ENCODE measurements at regions of chr6 and their contacts with region 1.

Region 1: DNA sequence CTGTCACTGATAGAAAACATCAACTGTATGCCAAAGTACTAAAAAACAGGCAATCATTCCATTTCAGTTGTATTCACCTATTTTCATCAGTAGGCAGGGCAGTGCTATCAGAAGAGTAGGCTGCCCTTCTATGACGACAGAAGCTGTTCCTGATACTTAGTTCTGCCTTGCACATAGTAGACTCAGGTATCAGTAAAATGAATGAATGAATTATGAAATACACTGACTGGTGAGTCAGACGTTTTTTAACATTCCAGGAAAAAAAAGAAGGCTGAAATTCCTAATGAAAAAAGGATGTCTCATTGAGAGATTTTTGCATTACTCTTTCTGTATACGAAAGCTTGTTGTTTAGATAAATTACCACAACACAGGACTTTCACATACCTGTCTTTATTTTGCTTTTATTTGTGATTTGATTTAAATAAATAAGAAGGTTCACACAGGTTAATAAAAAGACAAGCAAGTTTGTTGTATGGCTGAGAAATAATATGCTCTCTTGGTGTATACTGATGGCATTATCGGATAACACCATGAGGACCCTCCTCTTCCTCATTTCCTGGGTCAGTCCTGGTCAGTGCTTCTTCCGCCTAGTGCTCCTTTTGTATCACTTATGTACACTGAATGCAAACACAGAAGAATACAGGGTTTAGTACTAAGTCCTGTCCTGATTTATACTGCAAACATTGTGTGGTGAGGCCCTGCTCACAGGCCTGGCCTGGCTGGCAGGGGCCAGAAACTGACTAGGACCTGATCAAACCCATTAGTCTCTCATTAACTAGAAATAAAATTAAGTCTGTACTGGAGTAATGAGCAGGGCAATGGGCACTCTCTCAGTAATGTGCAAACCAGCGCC is 39.4 kb upstream of the SPDEF start:
- DNase-seq: no peak
- H3K4me3 Mint-ChIP-seq: no peak overlapping the region
- H3K27ac Mint-ChIP-seq: no peak overlapping the region
- H3K4me1 Mint-ChIP-seq: peaks cover 16% of the 10 kb centered on the region
- H3K27me3 Mint-ChIP-seq: no peaks in the 10 kb centered on the region

Region 2: GRCh38 chr6:34383161-34383631 is 212.4 kb before region 1 on chr6:
- CTCF ChIA-PET with region 1: no interaction called
- intact Hi-C with region 1: no loop called
- DNase-seq: no peak
- H3K4me3 Mint-ChIP-seq: no peak overlapping the region
- H3K27ac Mint-ChIP-seq: no peak overlapping the region
- H3K4me1 Mint-ChIP-seq: peaks cover 31% of the 10 kb centered on the region
- H3K27me3 Mint-ChIP-seq: no peaks in the 10 kb centered on the region

Region 3: GRCh38 chr6:34526992-34527728 is 68.4 kb before region 1 on chr6:
- CTCF ChIA-PET with region 1: no interaction called
- intact Hi-C with region 1: no loop called
- DNase-seq: peak; percentile 97
- H3K4me3 Mint-ChIP-seq: peak overlapping the region; percentile 38
- H3K27ac Mint-ChIP-seq: no peak overlapping the region
- H3K4me1 Mint-ChIP-seq: peaks cover 6% of the 10 kb centered on the region
- H3K27me3 Mint-ChIP-seq: no peaks in the 10 kb centered on the region

Region 4: DNA sequence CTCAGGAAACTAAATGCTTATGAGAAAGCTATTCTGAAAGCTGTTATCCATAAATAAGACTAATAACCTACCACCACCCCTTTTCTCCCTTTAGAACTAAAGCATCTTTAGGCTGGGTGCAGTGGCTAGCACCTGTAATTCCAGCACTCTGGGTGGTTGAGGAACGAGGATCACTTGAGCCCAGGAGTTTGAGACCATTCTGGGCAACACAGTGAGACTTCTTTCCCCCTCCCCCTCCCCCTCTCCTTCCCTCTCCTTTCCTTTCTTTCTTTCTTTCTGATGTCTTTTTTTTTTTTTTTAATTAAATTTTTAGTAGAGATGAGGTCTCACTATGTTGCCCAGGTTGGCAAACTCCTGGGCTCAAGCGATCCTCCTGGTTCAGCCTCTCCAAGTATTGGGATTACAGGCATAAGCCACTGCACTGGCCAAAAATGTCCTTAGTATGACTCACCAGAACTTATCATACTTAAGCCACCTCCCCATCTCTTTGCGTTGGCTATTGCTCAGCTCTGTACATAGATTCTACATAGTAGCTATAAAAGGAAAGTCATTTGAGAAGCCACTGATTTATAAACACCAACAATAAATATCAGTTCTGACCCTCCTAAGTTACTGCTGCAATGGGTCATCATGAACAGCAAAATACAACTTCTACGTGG is 15.4 kb after region 1 on chr6:
- CTCF ChIA-PET with region 1: interaction called, 30 read pairs
- intact Hi-C with region 1: no loop called
- DNase-seq: no peak
- H3K4me3 Mint-ChIP-seq: no peak overlapping the region
- H3K27ac Mint-ChIP-seq: no peak overlapping the region
- H3K4me1 Mint-ChIP-seq: peaks cover 12% of the 10 kb centered on the region
- H3K27me3 Mint-ChIP-seq: no peaks in the 10 kb centered on the region